ENCODE measurements at regions of chr12 and their contacts with region 1.

Region 1: DNA sequence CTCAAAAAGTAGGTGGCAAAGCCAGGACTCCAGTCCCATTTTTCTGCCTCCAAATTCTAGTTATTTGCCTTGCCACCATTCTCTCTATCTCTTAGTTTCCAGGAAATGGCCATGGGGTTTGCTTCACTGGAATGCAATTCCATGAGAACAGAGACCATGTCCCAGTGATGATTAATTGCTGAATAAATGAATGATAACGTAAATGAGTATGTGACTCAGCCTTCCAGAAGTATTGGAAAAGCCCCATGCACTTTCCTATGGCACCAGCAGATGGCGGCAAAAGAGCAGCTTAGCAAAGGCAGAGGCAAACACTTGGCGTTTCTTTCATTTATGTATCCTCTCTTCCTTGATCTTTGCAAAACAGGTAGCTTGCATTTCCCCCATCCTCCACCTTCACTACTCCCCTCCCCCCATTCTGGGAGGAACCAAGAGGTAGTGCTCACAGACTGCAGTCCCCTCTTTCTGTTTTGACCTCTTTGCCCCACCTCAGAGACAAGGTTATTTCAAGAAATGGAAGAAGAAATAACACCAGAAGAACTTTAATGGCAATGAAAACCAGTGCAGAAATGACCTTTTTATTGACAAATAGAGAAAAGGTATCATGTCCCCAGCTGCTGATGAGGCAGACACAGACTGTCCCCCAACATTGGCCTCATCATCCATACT is 21.3 kb downstream of the TBX3 start:
- DNase-seq: peak; percentile 80 to 97
- H3K4me3 ChIP-seq: no peak overlapping the region
- CTCF ChIP-seq: peak in 1 of 3 donors; percentile 94
- POLR2A ChIP-seq: no peak

Region 2: GRCh38 chr12:114284041-114284440 is 378.6 kb before region 1 on chr12:
- intact Hi-C with region 1: no loop called
- DNase-seq: no peak
- H3K4me3 ChIP-seq: no peak overlapping the region
- CTCF ChIP-seq: no peak
- POLR2A ChIP-seq: no peak

Region 3: GRCh38 chr12:114598111-114598510 is 64.5 kb before region 1 on chr12:
- intact Hi-C with region 1: no loop called
- DNase-seq: no peak
- H3K4me3 ChIP-seq: no peak overlapping the region
- CTCF ChIP-seq: no peak
- POLR2A ChIP-seq: no peak

Region 4: DNA sequence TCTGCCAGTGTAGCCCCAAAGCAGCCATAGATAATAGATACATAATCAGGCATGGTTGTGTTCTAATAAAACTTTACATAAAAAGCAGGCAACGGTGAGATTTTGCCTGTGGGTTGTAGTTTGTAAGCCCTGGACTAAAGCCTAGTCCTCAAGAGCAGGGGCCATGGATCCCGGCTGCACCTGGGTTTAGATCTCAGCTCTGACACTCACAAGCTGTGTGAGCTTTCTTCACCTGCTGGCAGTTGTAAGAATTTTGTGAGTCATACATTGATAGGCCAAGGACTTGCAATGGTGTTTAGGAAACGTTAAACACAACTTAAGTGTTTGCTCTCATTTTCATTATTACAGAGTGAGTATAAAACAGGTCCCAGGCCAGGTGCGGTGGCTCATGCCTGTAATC is 417.1 kb after region 1 on chr12:
- intact Hi-C with region 1: no loop called
- DNase-seq: no peak
- H3K4me3 ChIP-seq: no peak overlapping the region
- CTCF ChIP-seq: no peak
- POLR2A ChIP-seq: no peak

Region 5: DNA sequence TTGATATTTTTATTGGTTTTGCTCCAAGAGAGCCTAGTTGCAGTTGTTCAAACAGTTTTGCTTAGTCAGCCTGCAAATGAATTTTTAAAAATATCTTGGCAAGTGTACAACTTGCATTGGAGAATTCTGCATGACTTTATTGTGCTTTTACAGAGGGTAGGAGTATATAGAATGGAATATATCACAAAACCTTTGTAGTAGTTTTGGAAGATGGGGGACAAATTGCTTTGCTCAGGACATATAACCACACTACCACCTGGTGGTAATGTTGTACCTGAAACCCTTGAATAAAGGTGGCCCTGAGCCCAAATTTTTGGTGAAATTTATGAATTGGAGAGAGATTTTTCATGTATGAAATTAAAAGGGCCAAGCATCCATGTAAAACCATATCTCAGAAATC is 969.7 kb after region 1 on chr12:
- intact Hi-C with region 1: loop called (anchors 10 kb)
- DNase-seq: no peak
- H3K4me3 ChIP-seq: no peak overlapping the region
- CTCF ChIP-seq: no peak
- POLR2A ChIP-seq: no peak

Measured in lower leg skin (tissue), 4 donors.